Pancreas (tissue), 10 donors: ENCODE measurements at regions of chr6 and their contacts with region 1.

Region 1: GRCh38 chr6:45714741-45715507 is 300.7 kb downstream of the CLIC5 start:
- DNase-seq: peak in 3 of 6 donors; percentile 31 to 63 (median 44)
- ATAC-seq: peak; percentile 60 to 98 (median 98)
- H3K4me3 ChIP-seq: no peak overlapping the region
- H3K27ac ChIP-seq: no peak overlapping the region
- H3K4me1 ChIP-seq: no peaks in the 10 kb centered on the region
- H3K27me3 ChIP-seq: no peaks in the 10 kb centered on the region
- CTCF ChIP-seq: peak; percentile 26 to 71 (median 60)

Region 2: GRCh38 chr6:44475779-44476434 is 1239.0 kb before region 1 on chr6:
- intact Hi-C with region 1: loop called in 2 of 3 experiments (anchors 10 kb)
- DNase-seq: peak; percentile 66 to 95 (median 86)
- ATAC-seq: peak; percentile 96 to 99 (median 98)
- H3K4me3 ChIP-seq: no peak overlapping the region
- H3K27ac ChIP-seq: no peak overlapping the region
- H3K4me1 ChIP-seq: no peaks in the 10 kb centered on the region
- H3K27me3 ChIP-seq: no peaks in the 10 kb centered on the region
- CTCF ChIP-seq: peak; percentile 89 to 94 (median 91)

Region 3: GRCh38 chr6:44655412-44656342 is 1059.2 kb before region 1 on chr6:
- intact Hi-C with region 1: loop called in 2 of 3 experiments (anchors 5 kb)
- DNase-seq: peak; percentile 28 to 90 (median 68)
- ATAC-seq: peak; percentile 58 to 93 (median 90)
- H3K4me3 ChIP-seq: no peak overlapping the region
- H3K27ac ChIP-seq: peak overlapping the region in 1 of 4 donors; percentile 23
- H3K4me1 ChIP-seq: no peaks in the 10 kb centered on the region
- H3K27me3 ChIP-seq: no peaks in the 10 kb centered on the region
- CTCF ChIP-seq: peak; percentile 82 to 93 (median 85)

Region 4: DNA sequence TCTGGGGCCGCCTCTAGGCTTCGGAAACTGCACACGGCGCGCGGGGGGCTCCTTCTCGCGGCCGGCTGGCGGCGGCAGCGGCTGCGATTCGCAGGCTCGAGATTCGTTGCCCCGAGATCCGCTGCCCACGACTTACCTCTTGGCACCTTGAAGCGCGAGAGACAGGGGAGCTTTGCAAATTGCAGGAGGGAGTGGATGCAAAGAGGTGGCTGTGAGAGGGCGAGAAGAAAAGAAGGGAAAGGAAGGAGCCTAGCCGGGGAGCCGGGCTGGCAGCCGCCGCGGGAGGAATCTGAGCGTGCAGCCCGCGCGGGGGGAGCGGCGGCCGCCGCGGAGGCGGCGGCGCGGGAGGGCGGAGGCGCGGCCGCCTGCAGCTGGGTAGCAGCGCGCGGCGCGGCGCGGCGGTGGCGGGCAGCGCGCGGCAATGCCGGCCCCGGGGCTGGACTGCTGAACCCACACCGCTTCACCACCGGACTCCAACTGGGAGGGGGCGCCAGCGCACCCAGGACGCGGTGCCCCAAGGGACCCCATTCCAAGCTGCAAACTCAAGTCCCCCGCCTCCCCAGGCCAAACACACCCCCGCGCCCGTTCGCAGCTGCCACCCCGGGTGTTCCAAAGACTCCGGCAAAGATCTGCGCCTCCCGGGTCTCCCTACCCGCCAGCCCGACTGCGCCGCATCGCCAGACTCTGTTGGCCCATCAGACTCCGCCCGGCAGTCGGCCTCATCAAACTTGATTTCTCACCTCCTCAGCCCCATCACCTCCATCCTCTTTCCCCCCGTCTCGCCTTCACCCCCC is 293.0 kb before region 1 on chr6:
- intact Hi-C with region 1: loop called in 1 of 3 experiments (anchors 10 kb)
- DNase-seq: peak; percentile 18 to 86 (median 43)
- ATAC-seq: peak; percentile 61 to 78 (median 72)
- H3K4me3 ChIP-seq: peak overlapping the region; percentile 27 to 60 (median 44)
- H3K27ac ChIP-seq: peak overlapping the region in 2 of 4 donors; percentile 35 to 67
- H3K4me1 ChIP-seq: peaks cover 0 to 19% (median 6%) of the 10 kb centered on the region in 3 donors
- H3K27me3 ChIP-seq: peaks cover 0 to 42% (median 9%) of the 10 kb centered on the region in 4 donors
- CTCF ChIP-seq: no peak

Region 5: GRCh38 chr6:45757443-45758130 is 42.7 kb after region 1 on chr6:
- intact Hi-C with region 1: no loop called
- DNase-seq: no peak
- ATAC-seq: no peak
- H3K4me3 ChIP-seq: no peak overlapping the region
- H3K27ac ChIP-seq: no peak overlapping the region
- H3K4me1 ChIP-seq: no peaks in the 10 kb centered on the region
- H3K27me3 ChIP-seq: no peaks in the 10 kb centered on the region
- CTCF ChIP-seq: no peak